AG04449 (cell line): ENCODE measurements at regions of chr17 and their contacts with region 1.

Region 1: DNA sequence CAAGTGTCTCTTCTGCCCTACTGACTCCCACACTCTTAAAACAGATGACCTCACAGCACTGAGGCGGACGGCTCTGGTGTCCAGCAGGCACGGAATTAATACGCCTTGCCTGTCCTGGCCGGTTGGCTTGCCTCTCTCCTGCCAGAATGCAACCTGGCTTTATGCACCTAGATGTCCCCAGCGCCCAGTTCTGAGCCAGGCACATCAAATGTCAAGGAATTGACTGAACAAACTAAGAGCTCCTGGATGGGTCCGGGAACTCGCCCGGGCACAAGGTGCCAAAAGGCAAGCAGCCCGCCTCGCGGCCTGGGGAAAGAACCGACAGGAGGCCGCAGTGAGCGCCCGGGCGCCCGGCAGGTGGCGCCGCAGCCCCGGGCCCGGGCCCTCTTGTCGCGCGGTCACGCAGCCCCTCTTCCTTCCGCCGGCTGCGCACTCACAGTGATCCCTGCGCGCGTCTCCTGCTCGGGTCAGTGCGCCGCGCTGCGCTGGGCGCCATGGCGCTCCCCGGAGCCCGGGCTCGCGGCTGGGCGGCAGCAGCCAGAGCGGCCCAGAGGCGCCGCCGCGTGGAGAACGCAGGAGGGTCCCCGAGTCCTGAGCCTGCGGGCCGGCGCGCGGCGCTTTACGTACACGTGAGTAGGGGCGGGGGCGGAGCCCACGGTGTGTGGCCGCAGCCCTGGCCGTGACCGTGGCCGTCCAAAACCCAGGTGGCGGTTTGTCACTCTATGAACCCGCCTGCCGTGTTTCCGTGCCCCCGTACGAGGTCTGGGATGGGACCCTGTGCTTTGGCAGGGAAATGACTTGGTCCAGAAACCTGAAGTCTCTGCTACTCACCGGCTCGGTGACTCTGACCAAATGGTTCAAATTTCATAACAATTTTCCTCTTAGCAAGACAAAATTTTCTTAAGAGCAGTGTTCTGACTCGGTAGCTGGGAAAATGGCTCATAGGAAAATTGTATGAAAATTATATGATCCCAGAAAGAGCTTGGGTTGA is at the start of gene RSAD1:
- DNase-seq: peak; percentile 26
- H3K4me3 ChIP-seq: peak within 1 kb of the TSS; percentile 81
- CTCF ChIP-seq: peak; percentile 64

Region 2: GRCh38 chr17:50361561-50362480 is 116.9 kb before region 1 on chr17:
- CTCF ChIA-PET with region 1: interaction called, 39 read pairs
- POLR2A ChIA-PET with region 1: no interaction called
- DNase-seq: no peak
- H3K4me3 ChIP-seq: no peak overlapping the region
- CTCF ChIP-seq: peak; percentile 80

Region 3: GRCh38 chr17:50372758-50373556 is 105.7 kb before region 1 on chr17 and contains the starts of genes EME1 and MRPL27:
- CTCF ChIA-PET with region 1: no interaction called
- POLR2A ChIA-PET with region 1: no interaction called
- DNase-seq: no peak
- H3K4me3 ChIP-seq: peak within 1 kb of the TSS; percentile 100
- CTCF ChIP-seq: no peak

Region 4: DNA sequence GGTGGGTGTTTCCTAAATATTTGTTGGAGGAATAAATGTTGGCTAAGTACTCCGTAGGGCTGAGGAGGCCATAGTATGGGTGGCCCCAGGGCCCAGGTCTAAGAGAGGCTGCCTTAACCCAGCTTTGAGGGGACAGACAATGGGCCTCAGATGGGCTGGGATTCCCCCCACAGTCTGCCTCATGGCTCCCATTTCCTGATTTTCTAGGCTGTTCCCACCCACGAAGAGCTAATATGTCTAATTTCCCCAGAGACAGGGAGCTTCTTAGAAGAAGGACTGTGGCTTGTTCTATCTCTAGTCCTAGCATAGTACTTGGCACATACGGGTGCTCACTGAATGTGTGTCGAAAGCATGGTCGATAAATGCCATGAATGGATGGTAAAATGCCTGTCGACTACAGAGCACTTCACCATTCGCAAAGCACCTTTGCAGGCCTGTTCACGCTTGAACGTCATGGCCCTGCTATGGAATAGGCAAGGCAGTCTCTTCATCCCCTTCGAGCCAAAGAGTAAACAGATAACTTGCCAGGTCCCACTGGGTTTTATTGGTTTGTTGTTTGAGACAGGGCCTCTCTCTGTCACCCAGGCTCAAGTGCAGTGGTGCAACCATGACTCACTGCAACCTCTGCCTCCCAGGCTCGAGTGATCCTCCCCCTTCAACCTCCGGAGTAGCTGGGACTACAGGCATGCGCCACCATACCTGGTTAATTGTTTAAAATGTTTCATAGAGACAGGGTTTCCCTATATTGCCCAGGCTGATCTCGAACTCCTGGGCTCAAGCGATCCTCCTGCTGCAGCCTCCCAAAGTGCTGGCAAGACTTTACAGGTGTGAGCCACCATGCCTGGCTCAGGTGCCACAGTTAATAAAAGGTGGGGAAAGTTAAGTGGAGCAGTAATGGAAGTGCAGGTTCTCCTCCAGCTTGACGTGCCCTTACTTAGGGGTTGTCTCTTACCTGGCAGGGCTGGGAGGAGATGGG is 19.7 kb before region 1 on chr17:
- CTCF ChIA-PET with region 1: interaction called, 24 read pairs
- POLR2A ChIA-PET with region 1: no interaction called
- DNase-seq: no peak
- H3K4me3 ChIP-seq: no peak overlapping the region
- CTCF ChIP-seq: no peak

Region 5: GRCh38 chr17:50495918-50496317 is 17.2 kb after region 1 on chr17:
- CTCF ChIA-PET with region 1: interaction called, 78 read pairs
- POLR2A ChIA-PET with region 1: no interaction called
- DNase-seq: no peak
- H3K4me3 ChIP-seq: no peak overlapping the region
- CTCF ChIP-seq: no peak

Region 6: GRCh38 chr17:50541716-50542688 is 63.3 kb after region 1 on chr17:
- CTCF ChIA-PET with region 1: interaction called, 17 read pairs
- POLR2A ChIA-PET with region 1: interaction called, 3 read pairs
- DNase-seq: no peak
- H3K4me3 ChIP-seq: peak overlapping the region; percentile 67
- CTCF ChIP-seq: peak; percentile 53

Region 7: DNA sequence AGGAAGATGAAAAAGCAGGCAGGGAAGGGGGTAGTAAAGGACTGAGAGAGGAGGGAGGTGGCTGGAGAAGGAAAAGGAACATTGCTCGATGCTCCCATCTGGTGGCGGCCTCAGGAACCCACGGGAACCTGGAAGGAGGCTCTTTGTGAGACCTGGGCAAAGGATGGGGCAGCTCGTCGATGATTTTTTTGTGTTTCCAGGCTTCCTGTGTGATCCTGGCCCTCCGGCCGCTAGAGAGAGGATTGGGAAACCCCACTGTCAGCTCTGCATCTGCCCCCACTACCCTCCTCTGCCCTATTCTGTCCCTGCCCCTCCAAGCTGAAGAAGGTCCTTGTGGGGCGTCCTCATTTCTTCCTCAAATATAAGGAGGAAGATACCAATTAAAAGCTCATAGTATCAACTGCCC is 363.3 kb after region 1 on chr17:
- CTCF ChIA-PET with region 1: interaction called, 14 read pairs
- POLR2A ChIA-PET with region 1: no interaction called
- DNase-seq: no peak
- H3K4me3 ChIP-seq: no peak overlapping the region
- CTCF ChIP-seq: peak; percentile 91